ENCODE measurements at regions of chr3 and their contacts with region 1.

Region 1: GRCh38 chr3:153161138-153161713 is 800 bp upstream of the RAP2B start:
- DNase-seq: peak; percentile 95
- H3K4me3 Mint-ChIP-seq: peak overlapping the region; percentile 93
- H3K27ac Mint-ChIP-seq: peak overlapping the region; percentile 98
- H3K4me1 Mint-ChIP-seq: peaks cover 26% of the 10 kb centered on the region
- H3K27me3 Mint-ChIP-seq: no peaks in the 10 kb centered on the region

Region 2: DNA sequence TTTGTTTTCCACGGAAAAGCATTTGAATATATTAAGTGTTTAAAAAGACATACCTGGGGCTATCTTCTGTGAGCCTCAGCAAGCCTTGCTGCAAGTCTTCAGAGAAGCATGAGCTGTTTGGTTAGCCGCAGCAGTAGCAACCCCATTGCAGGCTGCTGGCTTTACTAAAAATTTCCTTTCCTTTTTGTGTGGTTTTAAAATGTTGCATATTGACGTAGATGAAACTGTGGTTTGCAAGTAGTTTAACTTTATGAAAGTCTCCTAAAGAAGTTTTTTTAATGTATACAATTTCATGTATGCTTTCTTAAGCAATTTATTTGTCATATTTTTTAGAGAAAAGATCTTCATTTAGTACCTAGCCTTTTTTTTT is 1958.2 kb before region 1 on chr3 and contains the start of gene GPR171:
- CTCF ChIA-PET with region 1: no interaction called
- POLR2A ChIA-PET with region 1: no interaction called
- intact Hi-C with region 1: loop called (anchors 5 kb)
- DNase-seq: peak; percentile 84
- H3K4me3 Mint-ChIP-seq: peak within 1 kb of the TSS; percentile 86
- H3K27ac Mint-ChIP-seq: peak within 1 kb of the TSS; percentile 99
- H3K4me1 Mint-ChIP-seq: peaks cover 65% of the 10 kb centered on the region
- H3K27me3 Mint-ChIP-seq: no peaks in the 10 kb centered on the region
- total RNA-seq, gene GPR171: 70.7 to 74.0 TPM

Region 3: DNA sequence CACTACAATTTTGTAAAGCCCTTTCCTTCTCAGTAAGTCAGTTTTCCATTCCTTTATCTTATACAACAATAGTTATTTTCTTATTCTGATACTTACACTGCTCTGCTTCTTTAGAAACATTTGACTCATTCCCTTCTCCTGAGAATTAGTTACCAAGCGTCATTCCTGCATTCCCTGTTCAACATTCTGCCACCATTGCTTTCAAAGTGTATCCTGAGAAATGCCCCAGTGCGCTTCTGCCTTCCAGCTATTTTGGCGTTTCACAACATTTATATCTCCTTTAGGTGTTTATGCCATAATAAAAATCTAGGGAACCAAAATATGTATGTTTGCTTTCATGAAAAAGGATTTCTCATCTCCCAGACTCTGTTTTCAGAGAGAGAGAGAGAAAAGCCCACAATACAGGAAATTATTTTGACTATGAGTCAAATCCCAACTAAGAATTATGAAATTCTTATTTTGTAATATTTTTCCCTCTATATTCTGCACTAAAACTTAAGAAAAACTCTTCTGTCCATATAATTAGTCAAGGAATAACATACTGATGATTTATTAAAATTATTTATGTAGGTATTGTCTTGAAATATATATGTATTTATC is 117.4 kb before region 1 on chr3:
- CTCF ChIA-PET with region 1: interaction called, 17 read pairs
- POLR2A ChIA-PET with region 1: no interaction called
- intact Hi-C with region 1: loop called (anchors 1 kb)
- DNase-seq: no peak
- H3K4me3 Mint-ChIP-seq: no peak overlapping the region
- H3K27ac Mint-ChIP-seq: no peak overlapping the region
- H3K4me1 Mint-ChIP-seq: peaks cover 7% of the 10 kb centered on the region
- H3K27me3 Mint-ChIP-seq: no peaks in the 10 kb centered on the region

Region 4: DNA sequence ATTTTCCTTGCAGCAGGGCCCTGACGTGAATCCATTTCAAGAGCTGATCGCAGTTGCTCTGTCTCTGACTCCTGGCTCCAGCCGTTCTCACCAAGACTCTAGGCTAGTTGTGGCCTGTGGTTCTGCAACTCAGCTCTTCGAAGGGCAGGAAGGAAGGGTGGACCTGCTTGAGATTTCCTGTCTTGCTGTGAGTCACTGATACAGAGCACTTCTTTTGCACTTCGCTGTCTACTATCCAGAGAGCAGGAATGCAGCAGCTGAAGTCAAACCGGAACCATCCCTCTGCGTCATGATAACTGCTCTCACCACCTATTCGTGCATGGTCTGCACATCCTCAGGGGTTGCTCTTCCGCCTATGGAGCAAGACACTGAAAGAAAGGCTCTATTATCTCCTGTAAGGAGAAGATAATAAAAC is 60.5 kb after region 1 on chr3:
- CTCF ChIA-PET with region 1: interaction called, 3 read pairs
- POLR2A ChIA-PET with region 1: interaction called, 16 read pairs
- intact Hi-C with region 1: loop called (anchors 1 kb)
- DNase-seq: peak; percentile 81
- H3K4me3 Mint-ChIP-seq: peak overlapping the region; percentile 72
- H3K27ac Mint-ChIP-seq: peak overlapping the region; percentile 90
- H3K4me1 Mint-ChIP-seq: peaks cover 54% of the 10 kb centered on the region
- H3K27me3 Mint-ChIP-seq: no peaks in the 10 kb centered on the region

Region 5: GRCh38 chr3:153338487-153338886 is 177.3 kb after region 1 on chr3:
- CTCF ChIA-PET with region 1: no interaction called
- POLR2A ChIA-PET with region 1: no interaction called
- intact Hi-C with region 1: no loop called
- DNase-seq: no peak
- H3K4me3 Mint-ChIP-seq: no peak overlapping the region
- H3K27ac Mint-ChIP-seq: no peak overlapping the region
- H3K4me1 Mint-ChIP-seq: peaks cover 5% of the 10 kb centered on the region
- H3K27me3 Mint-ChIP-seq: no peaks in the 10 kb centered on the region

Region 6: GRCh38 chr3:153595186-153595815 is 434.1 kb after region 1 on chr3:
- CTCF ChIA-PET with region 1: interaction called, 6 read pairs
- POLR2A ChIA-PET with region 1: no interaction called
- intact Hi-C with region 1: loop called (anchors 10 kb)
- DNase-seq: no peak
- H3K4me3 Mint-ChIP-seq: no peak overlapping the region
- H3K27ac Mint-ChIP-seq: no peak overlapping the region
- H3K4me1 Mint-ChIP-seq: peaks cover 13% of the 10 kb centered on the region
- H3K27me3 Mint-ChIP-seq: no peaks in the 10 kb centered on the region

Region 7: DNA sequence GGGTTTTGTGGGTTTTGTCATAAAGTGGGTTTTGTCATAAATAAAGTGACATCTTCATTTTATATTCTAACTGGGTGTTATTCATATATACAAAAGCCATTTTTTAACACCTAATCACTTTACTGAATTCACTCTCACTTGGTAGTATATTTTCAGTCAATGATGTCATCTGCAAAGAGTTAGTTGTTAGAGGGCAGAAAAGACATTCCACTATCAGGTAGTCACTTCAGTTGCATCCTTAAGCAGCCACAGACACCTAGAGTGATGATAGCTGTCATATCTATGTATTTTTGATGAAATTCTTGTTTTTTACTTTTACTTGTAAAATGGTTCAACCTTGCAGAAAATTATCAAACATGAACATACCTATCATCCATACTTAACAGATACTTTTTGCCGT is 1074.1 kb after region 1 on chr3:
- CTCF ChIA-PET with region 1: no interaction called
- POLR2A ChIA-PET with region 1: no interaction called
- intact Hi-C with region 1: loop called (anchors 10 kb)
- DNase-seq: no peak
- H3K4me3 Mint-ChIP-seq: no peak overlapping the region
- H3K27ac Mint-ChIP-seq: no peak overlapping the region
- H3K4me1 Mint-ChIP-seq: peaks cover 13% of the 10 kb centered on the region
- H3K27me3 Mint-ChIP-seq: peaks cover 24% of the 10 kb centered on the region